Naive thymus-derived CD4-positive, alpha-beta T cell (primary cell): ENCODE measurements at regions of chr11 and their contacts with region 1.

Region 1: DNA sequence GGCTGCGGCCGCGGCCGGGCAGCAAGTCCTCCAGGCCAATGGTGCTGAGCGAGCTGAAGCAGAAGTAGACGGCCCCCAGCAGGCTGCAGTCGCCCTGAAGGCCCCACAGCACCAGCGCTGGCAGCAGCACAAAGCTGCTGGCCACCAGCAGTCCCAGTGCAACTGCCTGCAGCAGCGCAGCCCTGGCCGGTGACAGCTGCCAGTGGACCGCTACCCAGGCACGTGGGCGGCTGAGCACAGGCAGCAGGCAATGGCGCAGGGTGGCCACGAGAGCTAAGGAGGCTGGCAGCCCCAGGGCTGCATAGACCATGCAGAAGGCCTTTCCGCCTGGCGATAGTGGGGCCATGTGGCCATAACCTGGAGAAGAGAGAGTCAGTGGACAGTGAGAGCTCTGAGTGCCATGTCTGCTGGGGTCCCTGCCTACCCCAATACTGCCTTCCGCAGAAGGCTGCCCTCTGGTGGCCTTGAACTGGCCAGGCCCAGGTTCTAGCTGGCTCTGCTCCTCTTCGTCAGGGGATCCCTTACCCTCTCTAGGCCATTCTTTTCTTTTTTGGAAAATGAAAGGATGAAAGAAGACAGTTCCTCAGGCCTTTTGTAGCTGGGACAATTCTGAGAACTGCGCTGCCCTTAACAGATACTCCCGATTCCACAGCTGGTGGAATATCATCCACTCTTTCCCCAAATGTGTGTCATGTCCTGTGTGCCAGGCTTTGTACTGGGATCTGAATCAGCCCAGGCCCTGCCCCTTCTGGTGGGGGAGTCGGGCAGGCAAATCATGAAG is 1.9 kb downstream of the KCNK7 start:
- DNase-seq: peak in 2 of 9 donors; percentile 35 to 42
- ATAC-seq: peak; percentile 67
- H3K4me3 ChIP-seq: no peak overlapping the region
- H3K4me3 Mint-ChIP-seq: peak overlapping the region in 1 of 10 donors; percentile 9
- H3K27ac ChIP-seq: no peak overlapping the region
- H3K27ac Mint-ChIP-seq: peak overlapping the region in 4 of 9 donors; percentile 25 to 69 (median 40)
- H3K4me1 ChIP-seq: peaks cover 9 to 15% of the 10 kb centered on the region in 2 donors
- H3K4me1 Mint-ChIP-seq: peaks cover 4 to 26% (median 23%) of the 10 kb centered on the region in 7 donors
- H3K27me3 ChIP-seq: no peaks in the 10 kb centered on the region
- H3K27me3 Mint-ChIP-seq: no peaks in the 10 kb centered on the region

Region 2: GRCh38 chr11:65334696-65335295 is 258.9 kb before region 1 on chr11:
- CTCF ChIA-PET with region 1: no interaction called
- POLR2A ChIA-PET with region 1: no interaction called
- intact Hi-C with region 1: no loop called
- DNase-seq: no peak
- ATAC-seq: no peak
- H3K4me3 ChIP-seq: peak overlapping the region; percentile 99
- H3K4me3 Mint-ChIP-seq: peak overlapping the region; percentile 89 to 99 (median 94)
- H3K27ac ChIP-seq: peak overlapping the region; percentile 79
- H3K27ac Mint-ChIP-seq: peak overlapping the region; percentile 78 to 98 (median 88)
- H3K4me1 ChIP-seq: peaks cover 11 to 30% of the 10 kb centered on the region in 2 donors
- H3K4me1 Mint-ChIP-seq: peaks cover 31 to 49% (median 41%) of the 10 kb centered on the region in 7 donors
- H3K27me3 ChIP-seq: no peaks in the 10 kb centered on the region
- H3K27me3 Mint-ChIP-seq: no peaks in the 10 kb centered on the region

Region 3: DNA sequence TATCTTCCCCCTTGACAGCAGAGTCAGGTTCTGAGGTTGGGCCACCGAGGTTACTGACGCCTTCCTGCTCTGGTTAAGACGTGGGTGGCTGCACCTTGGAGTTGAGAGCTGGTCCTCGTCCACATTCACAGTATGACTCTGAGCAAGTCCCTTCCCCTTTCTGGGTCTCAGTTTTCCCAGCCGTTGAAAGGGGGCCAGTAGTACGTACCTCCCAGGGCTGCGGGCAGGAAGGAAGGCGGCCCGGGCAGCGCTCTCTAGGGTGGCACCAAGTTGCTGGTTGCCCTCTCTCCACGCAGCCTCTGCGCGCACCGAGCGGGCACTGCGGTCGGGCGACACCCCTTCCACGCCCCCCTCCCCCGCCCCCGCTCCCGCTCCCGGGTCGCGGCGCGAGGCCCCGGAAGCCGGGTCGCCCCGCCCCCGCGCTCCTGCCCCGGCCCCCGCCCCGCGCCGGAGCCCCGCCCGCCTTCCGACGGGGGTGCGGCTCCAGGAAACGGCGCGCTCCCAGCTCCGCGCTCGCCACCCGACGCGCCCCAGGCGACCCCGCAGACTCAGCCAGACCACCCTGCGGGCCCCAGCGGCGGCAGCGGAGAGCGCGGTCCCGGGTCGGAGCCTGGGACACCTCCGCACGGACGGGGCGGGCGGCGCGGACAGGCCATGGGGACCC is 18.0 kb before region 1 on chr11 and contains the start of gene EHBP1L1:
- CTCF ChIA-PET with region 1: interaction called, 36 read pairs
- POLR2A ChIA-PET with region 1: interaction called, 61 read pairs
- intact Hi-C with region 1: loop called (anchors 1 kb)
- DNase-seq: peak; percentile 72 to 87 (median 81)
- ATAC-seq: peak; percentile 49
- H3K4me3 ChIP-seq: peak within 1 kb of the TSS; percentile 82
- H3K4me3 Mint-ChIP-seq: peak within 1 kb of the TSS; percentile 91 to 100 (median 93)
- H3K27ac ChIP-seq: peak within 1 kb of the TSS; percentile 96
- H3K27ac Mint-ChIP-seq: peak within 1 kb of the TSS; percentile 89 to 98 (median 95)
- H3K4me1 ChIP-seq: peaks cover 47 to 48% of the 10 kb centered on the region in 2 donors
- H3K4me1 Mint-ChIP-seq: peaks cover 30 to 59% (median 47%) of the 10 kb centered on the region in 7 donors
- H3K27me3 ChIP-seq: no peaks in the 10 kb centered on the region
- H3K27me3 Mint-ChIP-seq: no peaks in the 10 kb centered on the region
- total RNA-seq, gene EHBP1L1: 108 to 207 (median 128) TPM